AG04450 (cell line): ENCODE measurements at regions of chr6 and their contacts with region 1.

Region 1: GRCh38 chr6:107985701-107986100 is 27.7 kb upstream of the SEC63 start:
- DNase-seq: no peak
- H3K4me3 ChIP-seq: no peak overlapping the region
- H3K27ac ChIP-seq: no peak overlapping the region
- H3K27me3 ChIP-seq: peaks cover 5% of the 10 kb centered on the region
- CTCF ChIP-seq: no peak

Region 2: GRCh38 chr6:108002365-108003221 is 16.9 kb after region 1 on chr6:
- CTCF ChIA-PET with region 1: interaction called, 21 read pairs
- POLR2A ChIA-PET with region 1: no interaction called
- DNase-seq: no peak
- H3K4me3 ChIP-seq: no peak overlapping the region
- H3K27ac ChIP-seq: no peak overlapping the region
- H3K27me3 ChIP-seq: peaks cover 13% of the 10 kb centered on the region
- CTCF ChIP-seq: no peak

Region 3: DNA sequence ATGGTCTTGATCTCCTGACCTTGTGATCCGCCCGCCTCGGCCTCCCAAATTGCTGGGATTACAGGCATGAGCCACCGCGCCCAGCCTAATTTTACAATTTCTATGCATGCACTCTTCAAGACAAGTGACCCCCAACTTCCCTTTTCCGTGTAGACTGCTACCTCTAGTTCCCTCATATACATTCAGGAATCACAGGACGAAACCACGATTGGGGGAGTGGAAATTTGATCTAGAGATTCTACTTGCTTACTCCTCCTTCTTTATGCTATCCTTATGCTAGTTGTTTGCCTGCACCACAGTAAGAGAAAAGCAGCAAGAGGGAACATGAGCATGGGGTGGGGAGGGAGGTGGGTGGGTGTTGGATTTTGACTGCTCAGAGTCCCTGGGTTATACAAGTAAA is 54.0 kb after region 1 on chr6:
- CTCF ChIA-PET with region 1: interaction called, 309 read pairs
- POLR2A ChIA-PET with region 1: no interaction called
- DNase-seq: no peak
- H3K4me3 ChIP-seq: no peak overlapping the region
- H3K27ac ChIP-seq: no peak overlapping the region
- H3K27me3 ChIP-seq: no peaks in the 10 kb centered on the region
- CTCF ChIP-seq: no peak

Region 4: DNA sequence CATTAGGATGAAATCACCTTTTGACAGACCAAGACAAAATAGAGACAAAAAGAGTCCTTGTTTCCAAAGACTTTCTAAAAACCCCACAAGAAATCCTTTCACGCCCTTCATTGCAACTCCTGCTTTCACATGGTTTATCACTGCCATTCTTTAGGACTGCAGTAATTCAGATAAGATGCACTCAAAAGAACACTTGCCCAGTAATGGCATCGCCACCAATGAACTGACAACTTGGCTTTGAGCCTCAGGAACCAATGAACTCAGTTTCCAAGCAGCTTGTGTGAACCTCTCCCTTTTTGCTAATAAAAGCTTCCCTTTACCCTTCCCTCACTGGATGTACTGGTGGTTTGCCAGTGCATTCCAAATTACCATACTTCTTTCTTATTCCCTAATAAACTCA is 67.0 kb after region 1 on chr6:
- CTCF ChIA-PET with region 1: interaction called, 309 read pairs
- POLR2A ChIA-PET with region 1: no interaction called
- DNase-seq: no peak
- H3K4me3 ChIP-seq: no peak overlapping the region
- H3K27ac ChIP-seq: no peak overlapping the region
- H3K27me3 ChIP-seq: no peaks in the 10 kb centered on the region
- CTCF ChIP-seq: no peak

Region 5: DNA sequence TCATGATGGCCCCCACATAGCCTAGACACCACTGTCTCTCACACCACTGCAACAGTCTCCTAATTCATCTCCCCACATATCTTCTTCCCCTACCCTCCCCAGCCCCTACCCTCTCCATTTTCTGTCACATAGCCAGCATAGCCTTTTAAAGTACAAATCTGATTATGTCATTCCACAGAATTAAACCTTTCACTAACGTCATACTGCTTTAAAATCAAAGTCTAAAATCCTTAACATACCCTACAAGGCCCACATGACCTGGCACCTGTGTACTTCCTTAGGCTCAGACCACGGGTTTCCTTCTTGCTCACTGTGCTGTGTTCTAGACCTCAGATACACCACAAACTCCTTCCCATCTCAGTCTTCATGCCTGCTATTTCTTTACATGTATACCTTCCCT is 82.9 kb after region 1 on chr6:
- CTCF ChIA-PET with region 1: interaction called, 10 read pairs
- POLR2A ChIA-PET with region 1: no interaction called
- DNase-seq: no peak
- H3K4me3 ChIP-seq: no peak overlapping the region
- H3K27ac ChIP-seq: no peak overlapping the region
- H3K27me3 ChIP-seq: no peaks in the 10 kb centered on the region
- CTCF ChIP-seq: no peak

Region 6: GRCh38 chr6:108526739-108527174 is 541.1 kb after region 1 on chr6:
- CTCF ChIA-PET with region 1: interaction called, 30 read pairs
- POLR2A ChIA-PET with region 1: no interaction called
- DNase-seq: peak; percentile 7
- H3K4me3 ChIP-seq: no peak overlapping the region
- H3K27ac ChIP-seq: no peak overlapping the region
- H3K27me3 ChIP-seq: peaks cover 9% of the 10 kb centered on the region
- CTCF ChIP-seq: peak; percentile 90